AG04450 (cell line): ENCODE measurements at regions of chr3 and their contacts with region 1.

Region 1: GRCh38 chr3:151439652-151440129 is 21.2 kb downstream of the IGSF10 start:
- DNase-seq: peak; percentile 48
- H3K4me3 ChIP-seq: no peak overlapping the region
- H3K27ac ChIP-seq: no peak overlapping the region
- H3K27me3 ChIP-seq: no peaks in the 10 kb centered on the region
- CTCF ChIP-seq: peak; percentile 65

Region 2: DNA sequence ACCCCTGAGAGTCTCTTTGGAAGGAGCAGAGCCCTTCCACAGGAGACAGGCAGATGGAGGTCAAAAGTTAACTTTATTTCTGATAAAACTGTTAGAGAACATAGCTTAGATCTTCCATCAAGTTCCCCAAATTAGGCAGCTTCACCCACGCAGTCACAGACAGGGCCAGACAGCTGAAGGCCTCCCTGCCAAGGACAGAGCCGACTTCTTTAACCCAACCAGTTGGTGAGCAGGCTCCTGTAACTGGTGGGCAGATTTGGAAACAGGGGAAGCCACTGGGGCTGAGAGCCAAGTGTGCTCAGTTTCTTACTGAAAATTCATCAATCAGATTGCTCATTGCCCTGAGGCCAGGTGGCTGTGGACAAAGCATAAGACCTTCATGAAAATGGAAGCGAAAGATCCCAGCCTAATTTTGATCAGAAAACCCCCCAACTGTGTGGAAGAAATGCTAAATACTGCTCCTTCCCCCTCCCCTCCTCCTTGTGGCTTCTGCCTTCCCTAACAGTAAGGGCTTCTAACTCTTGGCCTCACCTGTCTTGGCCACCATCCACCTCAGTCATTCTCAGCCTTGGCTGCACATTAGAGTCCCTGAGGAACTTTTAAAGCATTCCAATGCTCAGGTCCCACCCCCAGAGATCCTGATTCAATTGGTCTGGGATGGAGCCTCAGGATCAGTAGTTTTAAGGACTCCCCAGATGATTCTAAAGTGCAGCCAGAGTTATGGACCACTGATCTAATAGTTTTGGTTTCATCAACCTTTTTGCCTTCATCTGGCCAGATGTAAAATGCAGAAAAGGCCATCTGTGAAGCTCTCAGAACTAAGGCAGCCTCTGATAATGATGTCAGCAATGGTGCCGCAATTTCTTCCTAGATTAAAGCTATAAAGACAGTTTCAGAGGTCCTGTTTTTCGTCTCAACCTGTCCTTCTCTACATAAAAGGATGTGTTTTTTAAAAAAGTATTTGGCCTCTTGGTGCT is 478.7 kb before region 1 on chr3:
- CTCF ChIA-PET with region 1: no interaction called
- POLR2A ChIA-PET with region 1: no interaction called
- DNase-seq: no peak
- H3K4me3 ChIP-seq: no peak overlapping the region
- H3K27ac ChIP-seq: no peak overlapping the region
- H3K27me3 ChIP-seq: peaks cover 12% of the 10 kb centered on the region
- CTCF ChIP-seq: no peak

Region 3: GRCh38 chr3:151290673-151291072 is 149.0 kb before region 1 on chr3:
- CTCF ChIA-PET with region 1: interaction called, 11 read pairs
- POLR2A ChIA-PET with region 1: no interaction called
- DNase-seq: no peak
- H3K4me3 ChIP-seq: no peak overlapping the region
- H3K27ac ChIP-seq: no peak overlapping the region
- H3K27me3 ChIP-seq: no peaks in the 10 kb centered on the region
- CTCF ChIP-seq: peak; percentile 64

Region 4: GRCh38 chr3:151425627-151426335 is 13.9 kb before region 1 on chr3:
- CTCF ChIA-PET with region 1: interaction called, 11 read pairs
- POLR2A ChIA-PET with region 1: no interaction called
- DNase-seq: no peak
- H3K4me3 ChIP-seq: no peak overlapping the region
- H3K27ac ChIP-seq: no peak overlapping the region
- H3K27me3 ChIP-seq: no peaks in the 10 kb centered on the region
- CTCF ChIP-seq: peak; percentile 39

Region 5: GRCh38 chr3:151918253-151919029 is 478.8 kb after region 1 on chr3:
- CTCF ChIA-PET with region 1: interaction called, 43 read pairs
- POLR2A ChIA-PET with region 1: no interaction called
- DNase-seq: peak; percentile 29
- H3K4me3 ChIP-seq: no peak overlapping the region
- H3K27ac ChIP-seq: no peak overlapping the region
- H3K27me3 ChIP-seq: no peaks in the 10 kb centered on the region
- CTCF ChIP-seq: peak; percentile 67